ENCODE measurements at regions of chr3 and their contacts with region 1.

Region 1: GRCh38 chr3:171001957-171002694 is 24.4 kb downstream of the SLC2A2 start:
- DNase-seq: peak; percentile 100
- ATAC-seq: peak; percentile 92
- H3K4me3 ChIP-seq: peak overlapping the region in 1 of 3 experiments; percentile 19; a peak in 1 of 6 replicates
- H3K27ac ChIP-seq: peak overlapping the region; percentile 87
- H3K4me1 ChIP-seq: peaks cover 88% of the 10 kb centered on the region
- H3K27me3 ChIP-seq: no peaks in the 10 kb centered on the region
- CTCF ChIP-seq: no peak; the same call in 1 of the 2 replicates
- EP300 ChIP-seq: peak; percentile 82 to 98
- POLR2A ChIP-seq: no peak
- RAD21 ChIP-seq: peak; percentile 40; the same call in 1 of the 2 replicates

Region 2: GRCh38 chr3:170961616-170962400 is 40.3 kb before region 1 on chr3:
- CTCF ChIA-PET with region 1: no interaction called
- POLR2A ChIA-PET with region 1: interaction called, 4 read pairs
- in situ Hi-C with region 1: no loop called
- intact Hi-C with region 1: loop called (anchors 2 kb)
- DNase-seq: peak; percentile 76
- ATAC-seq: peak; percentile 91
- H3K4me3 ChIP-seq: peak overlapping the region in 1 of 3 experiments; percentile 20; a peak in 1 of 6 replicates
- H3K27ac ChIP-seq: peak overlapping the region; percentile 46
- H3K4me1 ChIP-seq: peaks cover 51% of the 10 kb centered on the region
- H3K27me3 ChIP-seq: no peaks in the 10 kb centered on the region
- CTCF ChIP-seq: peak; percentile 80
- EP300 ChIP-seq: no peak
- POLR2A ChIP-seq: no peak
- RAD21 ChIP-seq: peak; percentile 82; the same call in 1 of the 2 replicates

Region 3: DNA sequence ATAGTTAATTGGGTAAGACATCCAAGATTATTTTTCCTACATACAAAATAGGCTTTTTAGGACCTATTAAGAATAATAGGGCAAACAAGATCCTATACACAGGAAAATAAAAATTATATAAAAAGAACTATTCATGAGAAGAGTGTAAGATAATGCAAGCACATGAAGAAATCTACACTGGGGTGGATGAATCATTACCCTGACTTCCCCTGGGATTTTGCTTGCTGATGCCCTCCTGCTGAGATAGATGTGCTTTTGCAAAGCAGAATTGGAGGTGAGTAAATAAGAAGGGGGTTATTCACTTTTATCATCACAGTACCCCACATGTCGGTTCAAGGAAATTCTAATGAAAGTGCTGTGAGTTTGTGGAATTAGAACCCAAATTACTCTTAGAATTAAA is 24.2 kb before region 1 on chr3:
- CTCF ChIA-PET with region 1: no interaction called
- POLR2A ChIA-PET with region 1: interaction called, 7 read pairs
- in situ Hi-C with region 1: no loop called
- intact Hi-C with region 1: loop called (anchors 1 kb)
- DNase-seq: no peak
- ATAC-seq: no peak
- H3K4me3 ChIP-seq: no peak overlapping the region
- H3K27ac ChIP-seq: no peak overlapping the region
- H3K4me1 ChIP-seq: peaks cover 50% of the 10 kb centered on the region
- H3K27me3 ChIP-seq: no peaks in the 10 kb centered on the region
- CTCF ChIP-seq: no peak
- EP300 ChIP-seq: no peak
- POLR2A ChIP-seq: no peak
- RAD21 ChIP-seq: no peak

Region 4: GRCh38 chr3:171018156-171018935 is 16.2 kb after region 1 on chr3:
- CTCF ChIA-PET with region 1: no interaction called
- POLR2A ChIA-PET with region 1: interaction called, 8 read pairs
- in situ Hi-C with region 1: no loop called
- intact Hi-C with region 1: loop called (anchors 1 kb)
- DNase-seq: no peak
- ATAC-seq: peak; percentile 64
- H3K4me3 ChIP-seq: no peak overlapping the region
- H3K27ac ChIP-seq: no peak overlapping the region
- H3K4me1 ChIP-seq: peaks cover 75% of the 10 kb centered on the region
- H3K27me3 ChIP-seq: no peaks in the 10 kb centered on the region
- CTCF ChIP-seq: peak; percentile 59
- EP300 ChIP-seq: no peak
- POLR2A ChIP-seq: no peak
- RAD21 ChIP-seq: no peak

Region 5: GRCh38 chr3:171077261-171077660 is 75.1 kb after region 1 on chr3:
- CTCF ChIA-PET with region 1: no interaction called
- POLR2A ChIA-PET with region 1: no interaction called
- in situ Hi-C with region 1: no loop called
- intact Hi-C with region 1: no loop called
- DNase-seq: no peak
- ATAC-seq: no peak
- H3K4me3 ChIP-seq: no peak overlapping the region
- H3K27ac ChIP-seq: no peak overlapping the region
- H3K4me1 ChIP-seq: peaks cover 12% of the 10 kb centered on the region
- H3K27me3 ChIP-seq: no peaks in the 10 kb centered on the region
- CTCF ChIP-seq: no peak
- EP300 ChIP-seq: no peak
- POLR2A ChIP-seq: no peak
- RAD21 ChIP-seq: no peak

Region 6: GRCh38 chr3:171092467-171092911 is 90.4 kb after region 1 on chr3:
- CTCF ChIA-PET with region 1: no interaction called
- POLR2A ChIA-PET with region 1: no interaction called
- in situ Hi-C with region 1: no loop called
- intact Hi-C with region 1: loop called (anchors 1 kb)
- DNase-seq: peak; percentile 88
- ATAC-seq: peak; percentile 91
- H3K4me3 ChIP-seq: no peak overlapping the region
- H3K27ac ChIP-seq: peak overlapping the region; percentile 77
- H3K4me1 ChIP-seq: peaks cover 56% of the 10 kb centered on the region
- H3K27me3 ChIP-seq: no peaks in the 10 kb centered on the region
- CTCF ChIP-seq: no peak
- EP300 ChIP-seq: peak in 1 of 2 experiments; percentile 91; a peak in 2 of 4 replicates
- POLR2A ChIP-seq: no peak
- RAD21 ChIP-seq: no peak

Region 7: DNA sequence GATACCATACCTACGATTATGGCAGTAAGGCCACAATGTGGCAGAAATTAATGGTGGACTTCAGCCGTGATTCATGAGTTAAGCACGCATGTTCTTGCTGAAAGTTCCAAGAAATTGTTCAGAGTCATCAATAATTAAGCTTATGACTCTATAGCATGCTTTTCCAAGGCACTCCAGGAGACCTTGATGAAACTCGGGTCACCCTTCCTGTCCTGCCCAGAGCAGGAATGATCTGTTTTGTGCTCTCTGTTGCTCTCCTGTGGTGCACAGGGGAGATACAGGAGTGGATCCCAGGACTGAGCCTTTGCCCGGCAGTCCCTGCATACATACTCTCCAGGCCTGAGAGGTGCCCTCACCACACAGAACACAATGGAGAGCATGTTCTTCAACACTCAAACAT is 166.0 kb after region 1 on chr3:
- CTCF ChIA-PET with region 1: no interaction called
- POLR2A ChIA-PET with region 1: no interaction called
- in situ Hi-C with region 1: no loop called
- intact Hi-C with region 1: loop called (anchors 1 kb)
- DNase-seq: peak; percentile 76
- ATAC-seq: peak; percentile 99
- H3K4me3 ChIP-seq: no peak overlapping the region
- H3K27ac ChIP-seq: no peak overlapping the region
- H3K4me1 ChIP-seq: peaks cover 43% of the 10 kb centered on the region
- H3K27me3 ChIP-seq: no peaks in the 10 kb centered on the region; a peak in 1 of 5 replicates
- CTCF ChIP-seq: peak; percentile 85
- EP300 ChIP-seq: no peak
- POLR2A ChIP-seq: no peak
- RAD21 ChIP-seq: peak; percentile 74

Region 8: DNA sequence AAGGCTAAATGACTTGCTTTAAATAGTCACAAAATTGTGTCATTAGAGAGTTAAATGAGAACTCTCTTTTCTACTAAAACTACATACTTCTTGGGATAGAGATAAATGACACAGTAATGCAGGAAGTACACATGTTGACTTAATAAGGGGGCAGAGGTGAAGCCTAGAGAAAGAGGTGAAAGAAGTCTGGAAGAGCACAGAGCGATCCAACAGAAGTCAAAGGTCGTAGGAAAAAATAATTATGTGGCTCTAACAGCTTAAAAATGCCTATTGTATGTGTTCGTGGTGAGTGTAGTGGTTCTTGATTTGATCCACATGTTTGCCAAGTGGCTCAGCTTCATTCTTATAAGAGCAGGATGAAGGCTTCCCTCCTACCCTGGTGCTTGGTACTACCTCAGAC is 902.7 kb after region 1 on chr3:
- CTCF ChIA-PET with region 1: no interaction called
- POLR2A ChIA-PET with region 1: no interaction called
- in situ Hi-C with region 1: no loop called
- intact Hi-C with region 1: no loop called
- DNase-seq: peak; percentile 55
- ATAC-seq: peak; percentile 68
- H3K4me3 ChIP-seq: no peak overlapping the region
- H3K27ac ChIP-seq: peak overlapping the region; percentile 20
- H3K4me1 ChIP-seq: peaks cover 59% of the 10 kb centered on the region
- H3K27me3 ChIP-seq: no peaks in the 10 kb centered on the region
- CTCF ChIP-seq: no peak
- EP300 ChIP-seq: peak in 1 of 2 experiments; percentile 58; a peak in 1 of 4 replicates
- POLR2A ChIP-seq: no peak
- RAD21 ChIP-seq: no peak